CD8-positive, alpha-beta memory T cell (primary cell): ENCODE measurements at regions of chr22 and their contacts with region 1.

Region 1: DNA sequence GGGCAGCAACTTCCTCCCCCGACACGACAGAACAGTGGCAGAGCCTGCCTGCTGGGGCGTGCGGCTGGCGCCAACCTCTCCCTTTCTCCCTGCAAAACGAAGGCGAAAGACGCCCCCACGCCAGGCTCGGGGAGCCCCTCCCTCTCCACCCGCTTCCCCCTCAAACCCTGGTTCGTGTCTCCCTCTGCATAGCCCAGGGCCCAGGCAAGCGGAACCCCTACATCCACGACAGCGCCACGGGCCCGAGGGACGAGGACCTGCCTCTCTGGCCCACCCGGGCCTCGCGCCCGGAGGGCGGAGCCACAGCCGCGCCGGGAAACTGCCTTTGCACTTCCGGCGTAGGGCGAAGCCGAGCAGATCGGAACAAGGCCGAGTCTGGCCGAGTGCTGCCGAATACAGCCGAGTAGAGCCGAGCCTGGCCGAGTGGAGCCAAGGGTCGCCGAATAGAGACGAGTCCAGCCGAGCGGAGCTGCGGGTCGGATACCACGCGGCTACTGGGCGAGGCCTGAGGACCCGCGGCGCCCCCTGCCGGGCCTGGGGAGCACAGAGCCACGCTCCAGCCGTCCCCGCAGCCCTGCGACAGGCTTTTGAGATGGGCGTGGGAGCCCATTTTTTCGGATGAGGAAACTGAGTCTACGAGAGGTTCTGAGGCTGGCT is 11.2 kb upstream of the C1QTNF6 start:
- DNase-seq: peak; percentile 98 to 99 (median 99)
- H3K4me3 ChIP-seq: peak overlapping the region; percentile 82
- H3K4me3 Mint-ChIP-seq: peak overlapping the region; percentile 81 to 92 (median 84)
- H3K27ac ChIP-seq: peak overlapping the region; percentile 84
- H3K27ac Mint-ChIP-seq: peak overlapping the region; percentile 85 to 97 (median 96)
- H3K4me1 ChIP-seq: peaks cover 42% of the 10 kb centered on the region
- H3K4me1 Mint-ChIP-seq: peaks cover 33 to 51% (median 38%) of the 10 kb centered on the region in 3 donors
- H3K27me3 ChIP-seq: no peaks in the 10 kb centered on the region
- H3K27me3 Mint-ChIP-seq: no peaks in the 10 kb centered on the region

Region 2: DNA sequence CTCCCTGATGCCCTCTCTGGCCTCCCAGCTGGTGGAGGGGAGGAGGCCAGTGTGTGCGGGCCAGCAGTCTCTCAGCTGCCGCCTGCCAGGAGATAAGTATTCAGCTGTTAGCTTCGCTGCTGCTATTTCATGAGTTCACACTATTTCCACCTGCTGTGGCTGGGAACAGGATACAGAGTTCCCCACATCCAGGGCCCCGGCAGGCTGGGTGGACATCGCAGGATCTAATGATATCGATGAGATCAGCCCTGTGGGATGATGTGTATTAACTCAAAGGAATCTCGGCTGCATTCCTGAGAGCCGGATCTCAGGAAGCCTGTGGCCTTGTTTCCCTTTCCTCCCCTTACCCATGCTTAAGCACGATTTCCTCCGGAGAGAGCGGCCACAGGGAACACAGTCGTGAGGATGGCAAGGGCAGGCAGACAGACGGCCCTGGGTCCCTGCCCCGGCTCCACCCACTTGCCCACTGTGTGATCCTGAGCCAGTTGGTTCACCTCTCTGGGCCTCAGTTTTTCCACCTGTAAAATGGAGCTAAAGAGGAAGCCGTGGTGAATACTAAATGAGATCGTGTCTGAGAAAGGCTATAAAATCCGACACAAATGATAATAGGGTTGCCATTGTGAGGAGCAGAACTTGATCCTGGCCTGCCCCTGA is 375.9 kb before region 1 on chr22:
- CTCF ChIA-PET with region 1: no interaction called
- POLR2A ChIA-PET with region 1: no interaction called
- DNase-seq: no peak
- H3K4me3 ChIP-seq: no peak overlapping the region
- H3K4me3 Mint-ChIP-seq: no peak overlapping the region
- H3K27ac ChIP-seq: no peak overlapping the region
- H3K27ac Mint-ChIP-seq: no peak overlapping the region
- H3K4me1 ChIP-seq: no peaks in the 10 kb centered on the region
- H3K4me1 Mint-ChIP-seq: no peaks in the 10 kb centered on the region
- H3K27me3 ChIP-seq: peaks cover 10% of the 10 kb centered on the region
- H3K27me3 Mint-ChIP-seq: peaks cover 15 to 56% of the 10 kb centered on the region in 2 donors

Region 3: DNA sequence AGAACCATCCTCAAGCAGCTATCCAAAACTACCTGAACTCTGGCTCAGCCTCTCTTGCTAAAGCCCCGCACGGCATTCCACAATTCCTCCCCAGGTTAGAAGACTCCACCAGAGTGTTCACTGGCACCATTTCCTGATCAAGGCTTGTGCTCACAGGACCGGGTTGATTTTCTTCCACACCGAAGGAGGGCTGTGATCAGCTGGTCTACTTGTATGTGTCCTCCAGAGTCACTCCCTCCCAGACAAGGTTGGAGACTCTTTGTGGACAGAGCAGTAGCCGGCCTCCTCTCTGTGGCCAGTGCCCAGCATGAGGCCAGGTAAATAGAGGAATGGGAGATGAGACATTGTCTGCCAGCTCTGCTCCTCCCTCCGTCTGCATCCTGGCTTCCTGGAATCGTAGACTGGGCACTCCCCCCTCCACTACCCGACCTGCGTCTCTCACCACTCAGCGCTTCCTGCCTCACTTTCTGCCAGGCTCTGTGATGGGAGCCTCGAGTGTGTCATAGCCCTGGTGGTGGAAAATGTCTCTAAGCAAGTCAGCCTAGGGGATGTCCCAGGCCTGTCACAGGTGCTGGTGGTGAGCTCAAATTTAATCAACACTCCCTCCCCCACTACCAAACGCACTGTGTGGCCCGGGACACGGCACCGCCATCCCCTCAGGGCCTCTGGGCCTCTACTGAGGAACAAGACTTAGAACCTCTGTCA is 77.2 kb before region 1 on chr22:
- CTCF ChIA-PET with region 1: interaction called, 32 read pairs
- POLR2A ChIA-PET with region 1: interaction called, 12 read pairs
- DNase-seq: peak; percentile 87 to 97 (median 94)
- H3K4me3 ChIP-seq: peak overlapping the region; percentile 65
- H3K4me3 Mint-ChIP-seq: peak overlapping the region; percentile 4 to 89 (median 73)
- H3K27ac ChIP-seq: peak overlapping the region; percentile 95
- H3K27ac Mint-ChIP-seq: peak overlapping the region; percentile 96 to 100 (median 99)
- H3K4me1 ChIP-seq: peaks cover 30% of the 10 kb centered on the region
- H3K4me1 Mint-ChIP-seq: peaks cover 41 to 76% (median 48%) of the 10 kb centered on the region in 3 donors
- H3K27me3 ChIP-seq: no peaks in the 10 kb centered on the region
- H3K27me3 Mint-ChIP-seq: peaks cover 0 to 1% of the 10 kb centered on the region in 2 donors

Region 4: DNA sequence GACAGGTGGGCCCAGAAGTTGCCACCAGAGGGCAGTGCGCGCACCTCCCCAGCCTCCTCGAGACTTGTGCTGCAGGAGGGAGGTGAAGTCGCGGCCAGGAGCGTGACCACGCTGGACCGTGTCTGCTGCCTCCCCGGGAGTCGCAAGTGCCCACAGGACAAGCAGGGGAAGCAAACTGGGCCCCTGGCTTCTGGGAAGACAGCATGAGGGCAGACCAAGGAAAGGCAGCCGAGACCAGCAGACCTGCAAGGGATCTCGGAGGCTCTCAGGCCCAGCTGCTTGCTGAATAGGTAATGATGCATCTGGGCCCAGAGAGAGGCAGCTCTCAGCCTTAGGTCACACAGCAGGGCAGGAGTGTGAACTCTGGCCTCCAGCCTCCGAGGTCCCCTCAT is 32.6 kb before region 1 on chr22:
- CTCF ChIA-PET with region 1: interaction called, 127 read pairs
- POLR2A ChIA-PET with region 1: interaction called, 9 read pairs
- DNase-seq: peak; percentile 70 to 87 (median 75)
- H3K4me3 ChIP-seq: peak overlapping the region; percentile 63
- H3K4me3 Mint-ChIP-seq: peak overlapping the region; percentile 82 to 97 (median 89)
- H3K27ac ChIP-seq: peak overlapping the region; percentile 48
- H3K27ac Mint-ChIP-seq: peak overlapping the region; percentile 85 to 99 (median 96)
- H3K4me1 ChIP-seq: peaks cover 89% of the 10 kb centered on the region
- H3K4me1 Mint-ChIP-seq: peaks cover 95 to 100% (median 98%) of the 10 kb centered on the region in 3 donors
- H3K27me3 ChIP-seq: no peaks in the 10 kb centered on the region
- H3K27me3 Mint-ChIP-seq: no peaks in the 10 kb centered on the region

Region 5: DNA sequence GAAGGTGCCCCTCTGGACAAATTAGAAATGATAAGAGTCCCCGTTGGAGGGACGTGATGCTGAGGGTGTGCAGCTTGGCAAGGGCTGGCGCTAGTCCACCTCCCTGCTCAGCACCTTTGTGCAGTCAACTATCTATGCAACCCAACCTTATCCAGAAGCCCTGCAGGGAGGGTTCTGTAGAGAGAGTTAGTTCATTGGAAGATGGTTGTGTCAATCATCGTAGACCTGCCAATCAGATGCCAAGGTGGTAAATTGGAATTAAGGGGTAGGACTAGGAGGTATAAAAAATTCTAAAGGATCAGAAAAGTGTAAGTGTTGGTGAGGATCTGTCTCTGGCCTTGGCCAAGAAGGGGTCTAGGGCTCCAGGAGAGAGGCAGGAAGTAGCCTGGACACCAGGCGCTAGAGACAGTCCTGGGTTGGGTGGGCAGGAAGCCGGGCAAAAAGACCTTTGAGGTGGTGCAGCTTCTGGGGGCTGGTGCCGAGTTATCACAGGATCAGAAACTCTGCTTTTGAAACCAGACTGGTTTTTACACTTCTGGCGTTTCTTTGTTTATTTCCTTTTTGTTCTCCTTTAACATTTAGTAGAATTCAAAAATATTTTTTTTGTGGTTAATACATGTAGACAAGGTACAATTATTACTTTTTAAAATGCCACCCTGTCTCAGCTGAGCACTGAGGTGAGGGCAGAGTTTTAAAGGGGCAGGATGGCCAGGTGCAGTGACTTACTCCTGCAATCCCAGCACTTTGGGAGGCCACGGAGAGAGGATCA is 12.8 kb before region 1 on chr22:
- CTCF ChIA-PET with region 1: interaction called, 16 read pairs
- POLR2A ChIA-PET with region 1: interaction called, 5 read pairs
- DNase-seq: peak; percentile 33 to 80 (median 79)
- H3K4me3 ChIP-seq: peak overlapping the region; percentile 25
- H3K4me3 Mint-ChIP-seq: peak overlapping the region; percentile 29 to 81 (median 75)
- H3K27ac ChIP-seq: no peak overlapping the region
- H3K27ac Mint-ChIP-seq: peak overlapping the region; percentile 77 to 98 (median 91)
- H3K4me1 ChIP-seq: peaks cover 55% of the 10 kb centered on the region
- H3K4me1 Mint-ChIP-seq: peaks cover 61 to 82% (median 65%) of the 10 kb centered on the region in 3 donors
- H3K27me3 ChIP-seq: no peaks in the 10 kb centered on the region
- H3K27me3 Mint-ChIP-seq: no peaks in the 10 kb centered on the region

Region 6: GRCh38 chr22:37229805-37230672 is 30.8 kb after region 1 on chr22:
- CTCF ChIA-PET with region 1: interaction called, 19 read pairs
- POLR2A ChIA-PET with region 1: interaction called, 13 read pairs
- DNase-seq: peak; percentile 87 to 96 (median 90)
- H3K4me3 ChIP-seq: peak overlapping the region; percentile 85
- H3K4me3 Mint-ChIP-seq: peak overlapping the region; percentile 76 to 89 (median 85)
- H3K27ac ChIP-seq: peak overlapping the region; percentile 93
- H3K27ac Mint-ChIP-seq: peak overlapping the region; percentile 98 to 100 (median 99)
- H3K4me1 ChIP-seq: peaks cover 94% of the 10 kb centered on the region
- H3K4me1 Mint-ChIP-seq: peaks cover 86 to 92% (median 92%) of the 10 kb centered on the region in 3 donors
- H3K27me3 ChIP-seq: no peaks in the 10 kb centered on the region
- H3K27me3 Mint-ChIP-seq: no peaks in the 10 kb centered on the region

Region 7: DNA sequence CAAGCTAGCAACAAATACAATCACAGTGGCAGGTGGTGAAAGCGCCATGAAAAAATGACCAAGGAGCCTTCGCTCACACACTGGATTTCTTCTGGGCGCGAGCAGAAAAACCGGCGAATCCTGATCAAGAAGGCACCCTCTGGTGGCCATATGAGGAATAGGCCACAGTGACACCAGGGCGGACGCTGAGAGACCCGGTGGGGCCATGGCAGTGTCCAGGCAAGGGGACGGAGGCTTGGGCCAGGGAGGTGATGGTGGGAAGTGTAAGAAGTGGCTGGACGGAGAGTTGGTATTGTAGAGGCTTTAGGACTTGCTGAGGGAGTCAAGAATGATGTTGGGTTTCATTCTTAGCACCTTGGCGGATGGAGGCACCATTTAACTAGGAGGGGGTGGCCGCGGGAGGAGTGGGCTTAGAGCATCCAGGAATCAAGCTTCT is 61.7 kb after region 1 on chr22:
- CTCF ChIA-PET with region 1: interaction called, 43 read pairs
- POLR2A ChIA-PET with region 1: interaction called, 4 read pairs
- DNase-seq: peak; percentile 42 to 79 (median 57)
- H3K4me3 ChIP-seq: no peak overlapping the region
- H3K4me3 Mint-ChIP-seq: peak overlapping the region in 3 of 7 donors; percentile 2 to 46 (median 41)
- H3K27ac ChIP-seq: no peak overlapping the region
- H3K27ac Mint-ChIP-seq: peak overlapping the region in 7 of 8 donors; percentile 12 to 86 (median 53)
- H3K4me1 ChIP-seq: peaks cover 23% of the 10 kb centered on the region
- H3K4me1 Mint-ChIP-seq: peaks cover 7 to 13% (median 10%) of the 10 kb centered on the region in 3 donors
- H3K27me3 ChIP-seq: no peaks in the 10 kb centered on the region
- H3K27me3 Mint-ChIP-seq: peaks cover 0 to 4% of the 10 kb centered on the region in 2 donors

Region 8: DNA sequence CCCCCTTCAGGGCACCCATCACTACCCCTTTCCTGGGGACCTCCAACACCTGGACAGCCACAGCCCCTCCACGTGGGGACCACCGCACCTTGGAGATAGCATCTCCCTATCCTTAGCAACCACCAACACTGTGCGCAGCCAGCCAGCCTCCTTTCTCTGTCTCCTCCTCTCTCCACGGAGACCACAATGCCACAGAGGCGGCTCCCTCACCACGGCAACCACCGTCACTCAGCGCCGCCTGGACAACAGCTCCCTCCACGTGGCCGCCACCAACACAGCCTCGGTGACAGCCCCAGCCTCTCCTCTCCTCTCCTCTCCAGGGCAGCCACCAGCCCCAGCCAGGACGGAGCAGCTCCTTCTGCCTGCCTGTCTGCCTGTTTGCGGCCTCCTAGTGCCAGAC is 217.6 kb after region 1 on chr22:
- CTCF ChIA-PET with region 1: no interaction called
- POLR2A ChIA-PET with region 1: no interaction called
- DNase-seq: peak in 2 of 5 donors; percentile 48 to 53
- H3K4me3 ChIP-seq: no peak overlapping the region
- H3K4me3 Mint-ChIP-seq: peak overlapping the region; percentile 26 to 67 (median 54)
- H3K27ac ChIP-seq: no peak overlapping the region
- H3K27ac Mint-ChIP-seq: peak overlapping the region in 3 of 8 donors; percentile 5 to 42 (median 28)
- H3K4me1 ChIP-seq: peaks cover 12% of the 10 kb centered on the region
- H3K4me1 Mint-ChIP-seq: peaks cover 28 to 31% (median 30%) of the 10 kb centered on the region in 3 donors
- H3K27me3 ChIP-seq: peaks cover 4% of the 10 kb centered on the region
- H3K27me3 Mint-ChIP-seq: peaks cover 48 to 78% of the 10 kb centered on the region in 2 donors